Mammary epithelial cell (primary cell): ENCODE measurements at regions of chr17 and their contacts with region 1.

Region 1: DNA sequence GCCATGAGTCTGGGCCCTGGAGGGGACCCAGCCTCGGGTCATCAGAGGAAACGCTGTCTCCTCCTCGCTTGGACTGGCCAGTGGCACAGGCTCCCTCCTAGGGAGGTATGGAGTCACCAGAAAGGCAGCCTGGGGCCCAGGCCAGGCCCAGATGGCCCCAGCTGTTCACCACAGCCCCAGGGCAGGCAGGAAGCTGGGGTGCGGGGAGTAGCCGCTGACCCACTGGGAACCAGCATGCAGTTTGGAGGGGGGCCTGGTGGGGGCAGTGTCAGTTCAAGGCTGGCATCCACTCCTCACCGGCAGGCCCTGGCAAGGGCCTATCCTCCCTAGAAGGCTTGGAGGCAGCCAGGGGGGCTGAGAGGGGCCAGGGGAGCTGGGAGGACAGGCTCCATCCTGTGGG is 48.8 kb downstream of the SDK2 start:
- DNase-seq: peak; percentile 51
- H3K4me3 ChIP-seq: no peak overlapping the region
- H3K27ac ChIP-seq: no peak overlapping the region
- H3K4me1 ChIP-seq: peaks cover 14% of the 10 kb centered on the region
- H3K27me3 ChIP-seq: no peaks in the 10 kb centered on the region
- CTCF ChIP-seq: peak; percentile 64 to 91

Region 2: DNA sequence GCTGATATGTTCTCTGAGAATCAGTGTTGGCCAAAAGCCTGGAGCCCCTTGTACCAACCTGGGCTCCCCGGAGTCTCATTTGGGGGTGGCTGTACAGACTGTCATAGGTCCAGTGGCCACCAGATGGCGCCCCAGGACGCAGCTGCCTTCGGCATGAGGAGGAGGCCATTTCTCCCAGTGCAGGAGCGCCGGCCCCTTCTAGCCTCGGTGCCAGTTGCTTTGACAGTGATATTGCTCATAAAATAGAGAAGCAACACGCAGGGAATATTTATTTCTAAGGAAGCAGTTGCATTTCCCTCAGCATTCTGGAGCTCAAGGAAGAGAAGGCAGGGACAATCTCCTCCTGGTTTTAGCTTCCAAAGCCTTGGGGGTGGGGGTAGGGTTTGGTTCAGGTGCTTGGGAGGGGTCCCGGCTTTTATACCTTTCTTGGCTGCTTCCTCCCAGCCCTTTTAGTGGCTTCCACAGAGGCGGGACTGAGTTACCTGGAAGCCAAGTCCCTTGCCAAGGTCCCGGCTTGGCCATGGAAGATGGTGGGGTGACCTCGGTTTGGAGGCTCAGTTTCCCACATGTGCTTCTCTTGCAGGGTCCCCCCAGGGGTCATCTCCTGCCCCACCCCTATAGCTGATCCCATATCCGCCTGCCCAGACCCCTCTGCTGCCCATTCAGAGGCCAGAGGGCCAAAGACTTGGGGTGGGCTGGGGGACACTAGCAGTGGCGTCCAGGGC is 165.9 kb before region 1 on chr17:
- CTCF ChIA-PET with region 1: no interaction called
- dilution Hi-C with region 1: no loop called
- in situ Hi-C with region 1: no loop called
- intact Hi-C with region 1: loop called (anchors 5 kb)
- DNase-seq: peak; percentile 59
- H3K4me3 ChIP-seq: no peak overlapping the region
- H3K27ac ChIP-seq: no peak overlapping the region
- H3K4me1 ChIP-seq: no peaks in the 10 kb centered on the region
- H3K27me3 ChIP-seq: no peaks in the 10 kb centered on the region
- CTCF ChIP-seq: peak; percentile 91 to 96

Region 3: GRCh38 chr17:73710095-73710592 is 114.7 kb after region 1 on chr17:
- CTCF ChIA-PET with region 1: no interaction called
- dilution Hi-C with region 1: no loop called
- in situ Hi-C with region 1: no loop called
- intact Hi-C with region 1: loop called (anchors 1 kb)
- DNase-seq: peak; percentile 61
- H3K4me3 ChIP-seq: no peak overlapping the region
- H3K27ac ChIP-seq: no peak overlapping the region
- H3K4me1 ChIP-seq: peaks cover 25% of the 10 kb centered on the region
- H3K27me3 ChIP-seq: no peaks in the 10 kb centered on the region
- CTCF ChIP-seq: peak; percentile 81 to 86